ENCODE measurements at regions of chr20 and their contacts with region 1.

Region 1: GRCh38 chr20:34922654-34923424 is 32.8 kb downstream of the GSS start:
- DNase-seq: peak; percentile 83
- ATAC-seq: peak; percentile 86
- H3K4me3 ChIP-seq: no peak overlapping the region
- H3K27ac ChIP-seq: peak overlapping the region; percentile 91; the same call in 1 of the 2 replicates
- H3K4me1 ChIP-seq: peaks cover 10% of the 10 kb centered on the region
- H3K27me3 ChIP-seq: no peaks in the 10 kb centered on the region
- CTCF ChIP-seq: no peak
- POLR2A ChIP-seq: no peak
- RAD21 ChIP-seq: no peak

Region 2: GRCh38 chr20:34907616-34908469 is 15.0 kb before region 1 on chr20:
- CTCF ChIA-PET with region 1: no interaction called
- POLR2A ChIA-PET with region 1: interaction called, 11 read pairs
- dilution Hi-C with region 1: no loop called
- in situ Hi-C with region 1: no loop called
- intact Hi-C with region 1: no loop called
- DNase-seq: peak; percentile 92
- ATAC-seq: peak; percentile 99
- H3K4me3 ChIP-seq: no peak overlapping the region
- H3K27ac ChIP-seq: peak overlapping the region; percentile 61
- H3K4me1 ChIP-seq: peaks cover 6% of the 10 kb centered on the region
- H3K27me3 ChIP-seq: no peaks in the 10 kb centered on the region
- CTCF ChIP-seq: no peak
- POLR2A ChIP-seq: no peak
- RAD21 ChIP-seq: no peak

Region 3: DNA sequence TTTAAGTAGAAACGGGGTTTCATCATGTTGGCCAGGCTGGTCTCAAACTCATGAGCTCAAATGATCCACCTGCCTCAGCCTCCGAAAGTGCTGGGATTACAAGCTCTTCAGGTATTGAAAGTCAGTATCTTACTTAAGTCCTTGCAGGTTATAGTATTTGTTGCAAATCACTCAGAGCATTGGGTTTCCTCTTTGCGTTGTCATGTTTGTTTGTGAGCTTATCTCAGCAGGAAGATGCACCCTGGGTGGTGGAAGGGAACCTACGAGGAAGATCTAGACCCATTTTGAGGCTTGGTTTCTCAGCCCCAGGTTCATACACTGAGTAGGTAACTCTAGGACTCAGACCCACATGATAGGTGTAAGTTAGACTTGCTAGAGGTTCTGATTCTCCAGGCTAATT is 51.4 kb after region 1 on chr20:
- CTCF ChIA-PET with region 1: no interaction called
- POLR2A ChIA-PET with region 1: interaction called, 11 read pairs
- dilution Hi-C with region 1: no loop called
- in situ Hi-C with region 1: no loop called
- intact Hi-C with region 1: no loop called
- DNase-seq: no peak
- ATAC-seq: no peak
- H3K4me3 ChIP-seq: no peak overlapping the region
- H3K27ac ChIP-seq: no peak overlapping the region
- H3K4me1 ChIP-seq: no peaks in the 10 kb centered on the region
- H3K27me3 ChIP-seq: peaks cover 45% of the 10 kb centered on the region
- CTCF ChIP-seq: no peak
- POLR2A ChIP-seq: no peak
- RAD21 ChIP-seq: no peak

Measured in IMR-90 (cell line).